Activated T-helper 2 cell treated with anti-CD3 and anti-CD28 coated beads, Interferon-gamma antibody, Interleukin-2, Interleukin-4, amounts not matched to agents 10 μg/mL and 5 μg/mL and 100 μg/mL, durations not matched to agents 14 hours and 24 hours and 36 hours (primary cell): ENCODE measurements at regions of chr7 and their contacts with region 1.

Region 1: GRCh38 chr7:120805636-120806388 is 52.1 kb downstream of the TSPAN12 start:
- DNase-seq: peak; percentile 18
- H3K4me3 Mint-ChIP-seq: no peak overlapping the region
- H3K27ac Mint-ChIP-seq: no peak overlapping the region
- H3K4me1 Mint-ChIP-seq: no peaks in the 10 kb centered on the region
- H3K27me3 Mint-ChIP-seq: peaks cover 3% of the 10 kb centered on the region

Region 2: DNA sequence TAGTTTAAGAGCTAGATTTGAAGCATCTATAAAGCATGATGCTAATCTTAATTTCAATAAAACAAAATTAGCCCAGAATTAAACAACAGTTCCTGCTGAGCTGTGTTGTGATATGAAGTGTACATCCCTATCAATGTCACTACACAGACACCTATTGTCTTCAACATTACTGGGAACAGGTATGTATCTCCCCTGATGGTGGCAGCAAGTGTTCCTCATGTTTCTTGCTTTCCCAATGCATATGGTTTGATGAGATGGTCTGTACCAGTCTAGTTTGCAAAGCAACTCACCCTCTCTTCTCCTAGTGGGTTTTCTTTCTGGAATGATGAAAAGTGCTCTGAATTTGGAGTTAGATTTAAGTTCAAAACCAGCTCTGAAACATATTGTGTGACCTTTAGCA is 14.1 kb after region 1 on chr7:
- intact Hi-C with region 1: no loop called
- DNase-seq: no peak
- H3K4me3 Mint-ChIP-seq: no peak overlapping the region
- H3K27ac Mint-ChIP-seq: no peak overlapping the region
- H3K4me1 Mint-ChIP-seq: no peaks in the 10 kb centered on the region
- H3K27me3 Mint-ChIP-seq: peaks cover 5% of the 10 kb centered on the region

Region 3: DNA sequence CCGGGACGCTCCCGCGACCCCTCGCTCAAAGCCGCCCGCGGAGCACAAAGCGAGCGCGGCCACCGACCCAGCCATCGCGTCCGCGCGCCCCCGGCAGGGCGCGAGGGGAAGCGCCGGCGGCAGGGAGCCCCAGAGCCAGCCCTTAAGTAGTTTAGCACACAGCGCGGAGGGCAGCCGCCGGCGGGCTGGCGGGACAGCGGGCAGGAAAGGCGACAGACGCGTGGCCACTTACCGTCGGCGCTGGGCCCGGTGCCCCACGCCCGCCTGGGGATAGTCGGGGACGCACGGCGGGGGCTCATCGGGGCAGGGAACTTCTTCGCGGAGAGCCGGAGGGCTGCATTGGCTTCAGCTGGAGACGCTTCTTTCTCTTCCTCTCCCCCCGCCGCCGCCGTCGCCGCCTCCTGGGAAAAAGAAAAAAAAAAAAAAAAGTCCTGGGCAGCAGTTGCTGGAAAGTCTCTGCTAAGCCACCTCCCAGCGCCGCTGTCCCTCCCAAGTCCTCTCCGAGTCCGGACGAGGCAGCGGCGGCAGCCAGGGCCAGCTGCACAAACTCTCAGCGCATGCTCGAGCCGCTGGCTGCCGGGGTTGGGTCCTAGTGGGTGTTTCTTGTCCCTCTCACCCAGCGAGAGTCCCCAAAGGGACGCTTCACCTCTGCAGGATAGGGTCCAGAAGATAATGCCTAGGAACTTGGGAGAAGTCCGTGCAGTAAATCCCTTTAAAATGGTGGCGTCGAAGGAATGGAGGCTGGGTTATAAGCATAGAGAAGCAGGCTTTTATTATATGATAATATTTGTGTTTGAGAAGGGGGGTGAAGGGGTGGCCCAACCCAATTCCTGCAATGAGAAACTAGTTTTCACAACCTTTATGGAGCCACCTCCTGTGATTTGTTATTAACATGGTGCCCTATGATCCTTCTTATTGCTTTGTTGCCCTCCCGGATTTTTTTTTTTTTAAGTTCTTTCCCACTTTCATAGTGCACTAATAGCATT is 52.1 kb after region 1 on chr7 and contains the start of gene TSPAN12:
- intact Hi-C with region 1: loop called (anchors 5 kb)
- DNase-seq: peak; percentile 40
- H3K4me3 Mint-ChIP-seq: peak within 1 kb of the TSS; percentile 83
- H3K27ac Mint-ChIP-seq: no peak within 1 kb of the TSS
- H3K4me1 Mint-ChIP-seq: peaks cover 10% of the 10 kb centered on the region
- H3K27me3 Mint-ChIP-seq: peaks cover 64% of the 10 kb centered on the region
- total RNA-seq, gene TSPAN12: not detected in 2 replicates

Region 4: GRCh38 chr7:120941064-120941463 is 135.3 kb after region 1 on chr7:
- intact Hi-C with region 1: loop called (anchors 2 kb)
- DNase-seq: no peak
- H3K4me3 Mint-ChIP-seq: no peak overlapping the region
- H3K27ac Mint-ChIP-seq: no peak overlapping the region
- H3K4me1 Mint-ChIP-seq: peaks cover 3% of the 10 kb centered on the region
- H3K27me3 Mint-ChIP-seq: peaks cover 22% of the 10 kb centered on the region

Region 5: GRCh38 chr7:121081327-121081936 is 275.6 kb after region 1 on chr7:
- intact Hi-C with region 1: loop called (anchors 1 kb)
- DNase-seq: no peak
- H3K4me3 Mint-ChIP-seq: no peak overlapping the region
- H3K27ac Mint-ChIP-seq: no peak overlapping the region
- H3K4me1 Mint-ChIP-seq: peaks cover 3% of the 10 kb centered on the region
- H3K27me3 Mint-ChIP-seq: peaks cover 28% of the 10 kb centered on the region

Region 6: GRCh38 chr7:121107923-121108498 is 302.2 kb after region 1 on chr7:
- intact Hi-C with region 1: loop called (anchors 2 kb)
- DNase-seq: no peak
- H3K4me3 Mint-ChIP-seq: no peak overlapping the region
- H3K27ac Mint-ChIP-seq: no peak overlapping the region
- H3K4me1 Mint-ChIP-seq: no peaks in the 10 kb centered on the region
- H3K27me3 Mint-ChIP-seq: peaks cover 15% of the 10 kb centered on the region

Region 7: DNA sequence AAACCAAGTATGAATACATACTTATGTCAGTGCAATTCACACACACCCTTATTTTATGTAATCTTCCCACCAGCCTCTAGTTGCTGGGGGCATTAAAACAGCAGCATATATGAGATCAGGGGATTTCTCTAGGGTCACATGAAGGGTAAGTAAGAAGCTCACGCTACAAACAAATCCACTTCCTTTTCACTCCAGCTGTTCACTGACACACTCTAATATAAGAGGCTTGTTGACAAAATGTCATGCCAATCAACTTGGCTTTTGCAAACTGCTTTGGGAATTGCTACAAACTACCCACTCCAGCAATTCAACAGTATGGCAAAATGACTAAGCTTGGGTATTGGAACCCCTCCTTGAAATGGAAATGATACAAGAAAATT is 580.0 kb after region 1 on chr7:
- intact Hi-C with region 1: no loop called
- DNase-seq: no peak
- H3K4me3 Mint-ChIP-seq: no peak overlapping the region
- H3K27ac Mint-ChIP-seq: no peak overlapping the region
- H3K4me1 Mint-ChIP-seq: peaks cover 70% of the 10 kb centered on the region
- H3K27me3 Mint-ChIP-seq: no peaks in the 10 kb centered on the region

Region 8: GRCh38 chr7:121994625-121995410 is 1189.0 kb after region 1 on chr7:
- intact Hi-C with region 1: loop called (anchors 10 kb)
- DNase-seq: no peak
- H3K4me3 Mint-ChIP-seq: no peak overlapping the region
- H3K27ac Mint-ChIP-seq: no peak overlapping the region
- H3K4me1 Mint-ChIP-seq: no peaks in the 10 kb centered on the region
- H3K27me3 Mint-ChIP-seq: no peaks in the 10 kb centered on the region